ENCODE measurements at regions of chr7 and their contacts with region 1.

Region 1: DNA sequence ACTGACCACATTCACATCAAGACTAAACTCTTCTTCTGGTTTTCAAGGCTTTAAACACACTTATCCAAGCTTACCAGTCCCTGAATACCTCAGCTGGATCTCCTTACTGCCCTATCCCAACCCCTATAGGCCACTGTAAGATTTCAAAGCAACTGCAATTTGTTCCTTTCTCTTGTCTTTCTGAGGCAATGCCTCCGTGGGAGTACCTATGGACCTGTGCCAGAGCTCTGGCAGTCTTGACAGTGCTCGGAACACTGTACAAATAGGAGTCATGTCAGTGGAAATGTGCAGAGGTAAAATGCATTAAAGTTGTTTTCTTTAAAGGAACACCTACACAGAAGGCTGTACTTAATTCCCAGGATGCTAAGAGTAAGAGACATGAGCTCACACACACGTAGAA is 124.7 kb downstream of the CNOT4 start:
- DNase-seq: no peak
- H3K4me3 ChIP-seq: no peak overlapping the region
- H3K27ac ChIP-seq: no peak overlapping the region
- H3K4me1 ChIP-seq: peaks cover 11% of the 10 kb centered on the region
- H3K27me3 ChIP-seq: no peaks in the 10 kb centered on the region
- CTCF ChIP-seq: no peak

Region 2: GRCh38 chr7:135074085-135074484 is 311.1 kb before region 1 on chr7:
- CTCF ChIA-PET with region 1: no interaction called
- POLR2A ChIA-PET with region 1: no interaction called
- intact Hi-C with region 1: no loop called
- DNase-seq: no peak
- H3K4me3 ChIP-seq: no peak overlapping the region
- H3K27ac ChIP-seq: no peak overlapping the region
- H3K4me1 ChIP-seq: no peaks in the 10 kb centered on the region
- H3K27me3 ChIP-seq: peaks cover 11% of the 10 kb centered on the region; the same call in 1 of the 2 replicates
- CTCF ChIP-seq: no peak

Region 3: DNA sequence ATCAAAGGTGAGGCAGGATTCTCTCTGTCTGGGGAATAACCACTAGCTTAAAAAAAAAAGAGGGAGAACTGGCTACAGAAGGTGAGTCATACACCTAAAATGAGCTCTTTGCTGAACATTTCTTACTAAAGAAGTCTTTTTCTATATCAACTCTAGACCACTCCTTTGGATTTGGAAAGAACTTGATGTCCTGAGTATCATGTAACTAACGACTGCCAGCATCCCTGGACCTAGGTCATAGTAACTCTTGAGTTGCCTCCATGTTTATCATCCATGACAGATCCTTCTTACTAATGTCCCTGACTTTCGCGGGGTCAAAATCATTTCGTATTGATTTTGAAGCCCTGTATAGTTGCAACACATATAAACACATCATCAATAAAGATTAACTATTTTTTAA is 35.6 kb after region 1 on chr7:
- CTCF ChIA-PET with region 1: no interaction called
- POLR2A ChIA-PET with region 1: no interaction called
- intact Hi-C with region 1: loop called (anchors 5 kb)
- DNase-seq: no peak
- H3K4me3 ChIP-seq: no peak overlapping the region
- H3K27ac ChIP-seq: no peak overlapping the region
- H3K4me1 ChIP-seq: no peaks in the 10 kb centered on the region
- H3K27me3 ChIP-seq: no peaks in the 10 kb centered on the region
- CTCF ChIP-seq: no peak

Measured in PC-9 (cell line).